ENCODE measurements at regions of chr20 and their contacts with region 1.

Region 1: DNA sequence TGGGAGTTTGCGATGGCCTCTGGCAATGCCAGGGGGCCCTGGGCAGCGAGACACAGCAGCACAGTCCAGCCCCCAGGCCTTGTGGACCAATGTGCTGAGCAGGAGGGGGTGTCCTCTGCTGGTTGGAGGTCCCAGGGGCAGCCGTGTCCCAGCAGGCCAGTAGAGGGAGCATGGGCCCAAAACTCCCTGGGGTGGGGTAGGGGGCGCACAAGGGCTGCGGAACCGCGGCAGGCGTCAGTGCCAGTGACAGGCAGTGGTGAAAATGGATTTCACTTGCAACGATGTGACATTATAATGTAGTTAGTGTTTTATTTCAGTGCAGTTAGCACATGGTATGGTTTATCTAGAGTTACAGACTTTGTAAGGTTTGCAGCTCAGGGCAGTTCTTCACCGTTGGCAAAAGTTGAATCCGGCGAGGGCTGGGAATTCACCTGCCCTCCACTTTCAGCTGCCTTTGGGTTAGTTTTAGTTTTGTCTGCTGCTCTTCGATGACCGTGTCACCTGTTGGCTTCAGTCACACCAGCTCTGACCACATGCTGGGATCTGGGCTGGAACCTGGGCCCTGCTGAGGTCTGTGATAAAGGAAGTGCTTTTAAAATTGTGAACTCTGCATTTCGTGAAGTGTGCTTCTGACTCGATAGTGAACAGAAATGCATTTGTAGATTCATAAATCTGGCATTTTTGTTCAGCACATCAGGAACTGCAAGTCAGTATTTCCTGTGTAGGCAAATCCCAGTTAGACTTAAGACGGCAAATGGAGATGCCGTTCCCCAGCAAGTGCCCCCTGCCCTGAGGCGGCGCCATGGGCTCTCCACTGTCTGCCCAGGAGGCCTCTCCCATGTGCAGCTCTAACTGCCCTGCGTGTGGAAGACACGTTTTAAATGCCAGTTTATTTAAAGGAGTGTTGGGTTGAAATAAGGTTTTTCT is 46.8 kb downstream of the PYGB start:
- DNase-seq: peak; percentile 85
- ATAC-seq: peak; percentile 83
- H3K4me3 Mint-ChIP-seq: no peak overlapping the region
- H3K27ac Mint-ChIP-seq: no peak overlapping the region
- H3K4me1 Mint-ChIP-seq: peaks cover 28% of the 10 kb centered on the region
- H3K27me3 Mint-ChIP-seq: no peaks in the 10 kb centered on the region
- CTCF ChIP-seq: peak; percentile 56

Region 2: GRCh38 chr20:25148181-25148981 is 146.3 kb before region 1 on chr20:
- CTCF ChIA-PET with region 1: no interaction called
- POLR2A ChIA-PET with region 1: no interaction called
- DNase-seq: peak; percentile 58
- ATAC-seq: peak; percentile 63
- H3K4me3 Mint-ChIP-seq: peak overlapping the region; percentile 67
- H3K27ac Mint-ChIP-seq: no peak overlapping the region
- H3K4me1 Mint-ChIP-seq: peaks cover 5% of the 10 kb centered on the region
- H3K27me3 Mint-ChIP-seq: peaks cover 37% of the 10 kb centered on the region
- CTCF ChIP-seq: no peak

Region 3: DNA sequence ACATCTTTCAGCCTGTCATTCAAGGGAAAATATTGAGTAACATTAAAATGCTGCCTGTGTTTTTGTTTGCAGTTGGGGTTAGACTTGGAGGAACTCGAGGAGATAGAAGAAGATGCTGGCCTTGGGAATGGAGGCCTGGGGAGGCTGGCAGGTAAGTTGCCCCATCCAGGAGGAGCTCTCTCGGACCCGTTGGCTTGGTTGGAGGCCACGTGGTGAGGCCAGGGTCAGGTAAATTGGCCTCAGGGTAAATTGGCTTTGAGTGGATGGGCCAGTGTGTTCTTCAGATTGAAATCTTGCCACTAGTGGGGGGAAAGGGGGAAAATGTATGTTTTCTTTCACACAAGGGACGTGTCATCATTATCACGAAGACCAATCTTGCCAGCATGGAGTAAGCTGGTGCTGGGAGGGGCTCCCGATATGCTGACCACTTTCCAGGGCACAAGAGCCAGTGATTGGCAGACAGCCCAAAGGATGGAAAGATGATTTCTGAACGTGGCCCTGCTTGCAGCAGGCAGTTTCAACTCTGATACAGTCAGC is 25.6 kb before region 1 on chr20:
- CTCF ChIA-PET with region 1: no interaction called
- POLR2A ChIA-PET with region 1: no interaction called
- DNase-seq: peak; percentile 5
- ATAC-seq: no peak
- H3K4me3 Mint-ChIP-seq: no peak overlapping the region
- H3K27ac Mint-ChIP-seq: no peak overlapping the region
- H3K4me1 Mint-ChIP-seq: no peaks in the 10 kb centered on the region
- H3K27me3 Mint-ChIP-seq: no peaks in the 10 kb centered on the region
- CTCF ChIP-seq: no peak

Region 4: GRCh38 chr20:25315418-25316210 is 20.9 kb after region 1 on chr20:
- CTCF ChIA-PET with region 1: interaction called, 11 read pairs
- POLR2A ChIA-PET with region 1: no interaction called
- DNase-seq: peak; percentile 6
- ATAC-seq: no peak
- H3K4me3 Mint-ChIP-seq: no peak overlapping the region
- H3K27ac Mint-ChIP-seq: peak overlapping the region; percentile 84; the same call in 1 of the 2 replicates
- H3K4me1 Mint-ChIP-seq: peaks cover 6% of the 10 kb centered on the region
- H3K27me3 Mint-ChIP-seq: no peaks in the 10 kb centered on the region
- CTCF ChIP-seq: no peak

Region 5: GRCh38 chr20:25514747-25515340 is 220.1 kb after region 1 on chr20:
- CTCF ChIA-PET with region 1: no interaction called
- POLR2A ChIA-PET with region 1: no interaction called
- DNase-seq: no peak
- ATAC-seq: no peak
- H3K4me3 Mint-ChIP-seq: no peak overlapping the region
- H3K27ac Mint-ChIP-seq: no peak overlapping the region
- H3K4me1 Mint-ChIP-seq: no peaks in the 10 kb centered on the region
- H3K27me3 Mint-ChIP-seq: peaks cover 3% of the 10 kb centered on the region
- CTCF ChIP-seq: no peak

Measured in WTC11 (cell line).